ENCODE measurements at regions of chr5 and their contacts with region 1.

Region 1: GRCh38 chr5:132883261-132883834 is 9.9 kb downstream of the LEAP2 start:
- DNase-seq: peak in 4 of 5 donors; percentile 24 to 33 (median 28)
- H3K4me3 ChIP-seq: no peak overlapping the region
- H3K4me3 Mint-ChIP-seq: no peak overlapping the region
- H3K27ac ChIP-seq: no peak overlapping the region
- H3K27ac Mint-ChIP-seq: peak overlapping the region in 5 of 7 donors; percentile 36 to 84 (median 76)
- H3K4me1 ChIP-seq: no peaks in the 10 kb centered on the region
- H3K4me1 Mint-ChIP-seq: peaks cover 0 to 3% (median 0%) of the 10 kb centered on the region in 4 donors
- H3K27me3 ChIP-seq: no peaks in the 10 kb centered on the region
- H3K27me3 Mint-ChIP-seq: no peaks in the 10 kb centered on the region

Region 2: DNA sequence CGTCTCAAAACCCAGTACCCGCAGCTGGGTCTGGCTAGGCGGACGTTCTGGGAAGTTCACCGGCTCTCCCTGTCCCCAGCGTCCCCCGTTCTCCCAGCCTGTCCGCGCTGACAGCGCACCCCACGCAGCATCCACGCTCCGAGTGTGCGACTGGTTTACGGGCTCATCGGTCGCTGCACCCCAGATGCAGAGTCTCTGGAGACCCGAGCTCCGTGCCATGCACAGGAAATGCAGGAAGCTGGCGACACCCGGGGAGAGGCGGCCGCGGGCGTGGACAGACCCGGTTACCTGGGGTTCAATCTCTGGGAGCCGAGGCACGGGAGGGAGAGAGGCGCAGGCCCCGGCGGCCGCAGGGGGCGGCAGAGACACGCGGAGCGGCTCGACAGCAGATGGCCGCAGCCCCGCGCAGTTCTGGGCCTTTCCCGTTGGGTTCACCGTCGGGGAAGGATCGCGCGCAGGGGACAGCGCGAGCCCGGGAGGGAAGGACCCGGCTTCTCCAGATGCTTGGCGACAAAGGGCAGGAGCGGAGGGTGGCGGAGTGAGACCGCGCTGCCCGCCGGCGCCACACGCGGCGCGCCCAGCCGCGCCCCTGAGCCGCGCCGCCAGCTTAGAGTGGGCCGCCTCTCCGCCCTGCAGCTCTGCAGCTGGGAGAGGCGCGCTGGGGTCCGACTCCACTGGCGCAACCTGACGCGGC is 53.5 kb before region 1 on chr5:
- CTCF ChIA-PET with region 1: interaction called, 42 read pairs
- POLR2A ChIA-PET with region 1: interaction called, 9 read pairs
- intact Hi-C with region 1: loop called (anchors 1 kb)
- DNase-seq: peak; percentile 65 to 71 (median 68)
- H3K4me3 ChIP-seq: peak overlapping the region in 1 of 2 donors; percentile 58
- H3K4me3 Mint-ChIP-seq: peak overlapping the region; percentile 86 to 92 (median 90)
- H3K27ac ChIP-seq: no peak overlapping the region
- H3K27ac Mint-ChIP-seq: peak overlapping the region in 4 of 7 donors; percentile 12 to 83 (median 70)
- H3K4me1 ChIP-seq: no peaks in the 10 kb centered on the region
- H3K4me1 Mint-ChIP-seq: peaks cover 5 to 14% (median 8%) of the 10 kb centered on the region in 4 donors
- H3K27me3 ChIP-seq: peaks cover 8% of the 10 kb centered on the region
- H3K27me3 Mint-ChIP-seq: peaks cover 21 to 45% of the 10 kb centered on the region in 2 donors